Esophagus squamous epithelium (tissue), 5 donors: ENCODE measurements at regions of chr1 and their contacts with region 1.

Region 1: DNA sequence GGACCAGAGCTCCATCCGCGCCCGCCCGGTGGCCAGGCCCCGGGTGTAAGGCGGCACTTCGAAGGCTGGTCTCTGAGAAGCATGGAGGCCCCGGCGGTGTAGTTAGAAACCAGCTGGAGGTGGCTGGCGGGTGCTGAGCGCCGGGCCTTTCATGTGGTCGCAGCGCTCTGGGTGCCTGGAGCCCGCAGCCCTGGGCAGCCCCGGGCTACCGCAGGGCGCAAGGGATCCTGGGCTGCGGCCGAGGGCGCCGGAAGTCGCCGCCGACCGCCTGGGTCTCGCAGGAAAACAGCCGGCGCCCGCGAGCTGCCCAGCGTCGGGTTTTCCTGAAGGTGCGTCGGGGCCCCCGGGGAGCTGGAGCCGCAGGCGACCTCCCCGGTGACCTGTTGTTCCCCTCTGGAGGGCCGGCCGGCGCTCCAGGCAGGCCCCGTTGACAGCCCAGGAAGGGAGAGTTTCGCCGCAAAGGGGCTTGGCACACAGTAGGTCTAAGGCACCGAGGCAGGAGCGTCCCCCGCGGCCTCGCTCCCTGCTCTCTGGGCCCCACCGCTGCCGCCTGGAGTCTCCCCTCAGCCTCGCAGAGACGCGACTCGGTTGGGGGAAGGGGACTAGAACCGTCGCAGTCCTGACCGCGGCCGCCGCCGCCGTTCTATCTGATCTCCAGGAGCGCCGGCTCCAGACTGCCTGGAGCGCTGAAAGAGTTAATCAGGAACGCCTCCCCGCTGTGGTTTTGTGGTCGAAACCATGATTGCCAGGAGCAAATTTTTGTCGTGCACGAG is 2.7 kb downstream of the GRHL3 start:
- DNase-seq: no peak
- H3K4me3 ChIP-seq: peak overlapping the region; percentile 55 to 70 (median 68)
- H3K27ac ChIP-seq: peak overlapping the region; percentile 89 to 97 (median 94)
- H3K4me1 ChIP-seq: peaks cover 24 to 93% (median 39%) of the 10 kb centered on the region in 3 donors
- H3K27me3 ChIP-seq: peaks cover 0 to 35% (median 0%) of the 10 kb centered on the region in 4 donors
- CTCF ChIP-seq: no peak
- POLR2A ChIP-seq: peak in 1 of 4 donors; percentile 41

Region 2: DNA sequence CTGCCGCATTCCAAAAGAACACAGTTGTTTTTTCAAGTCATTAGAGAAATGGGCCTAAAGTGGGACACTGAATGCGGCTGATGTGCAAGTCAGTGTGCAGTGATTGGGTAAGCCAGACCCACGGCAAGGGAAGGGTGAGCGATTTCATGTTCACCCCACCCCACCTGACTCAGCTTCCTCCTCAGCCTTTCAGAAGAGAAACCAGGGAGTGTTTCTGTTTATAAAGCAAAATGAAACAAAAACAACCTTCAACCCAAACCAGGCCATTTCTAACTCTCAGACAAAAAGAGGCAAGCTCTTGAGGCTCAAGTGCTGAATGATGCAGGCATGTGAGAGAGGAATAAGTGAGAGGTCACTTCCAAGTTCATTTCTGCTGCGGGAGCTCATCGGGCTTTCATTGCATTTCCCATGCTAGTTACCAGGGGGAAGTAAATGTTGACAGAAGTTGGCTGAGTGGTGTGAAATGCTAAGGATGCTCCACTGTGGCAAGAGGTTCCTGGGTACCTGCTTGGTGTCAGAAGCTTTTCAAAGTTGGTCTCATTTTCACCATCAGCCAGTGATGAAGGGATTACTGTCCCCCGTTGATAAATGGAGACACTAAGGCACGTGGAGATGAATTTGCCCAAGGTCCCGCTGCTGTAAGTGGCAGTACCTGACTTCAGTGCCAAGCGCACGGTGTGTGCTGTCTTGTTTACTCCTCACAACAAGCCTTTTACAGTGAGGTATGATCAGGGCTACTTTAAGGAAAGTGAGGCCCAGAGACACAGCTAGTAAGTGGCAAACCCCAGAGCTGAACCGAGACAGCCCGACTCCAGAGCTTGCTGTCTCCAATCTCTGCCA is 62.6 kb after region 1 on chr1:
- intact Hi-C with region 1: loop called (anchors 5 kb)
- DNase-seq: no peak
- H3K4me3 ChIP-seq: peak overlapping the region in 1 of 4 donors; percentile 16
- H3K27ac ChIP-seq: peak overlapping the region; percentile 82 to 90 (median 84)
- H3K4me1 ChIP-seq: peaks cover 23 to 98% (median 53%) of the 10 kb centered on the region in 3 donors
- H3K27me3 ChIP-seq: no peaks in the 10 kb centered on the region
- CTCF ChIP-seq: no peak
- POLR2A ChIP-seq: no peak